GM13977 (cell line): ENCODE measurements at regions of chr19 and their contacts with region 1.

Region 1: GRCh38 chr19:9796113-9796773 is 22.6 kb downstream of the FBXL12 start:
- DNase-seq: peak; percentile 75
- CTCF ChIP-seq: peak; percentile 79

Region 2: DNA sequence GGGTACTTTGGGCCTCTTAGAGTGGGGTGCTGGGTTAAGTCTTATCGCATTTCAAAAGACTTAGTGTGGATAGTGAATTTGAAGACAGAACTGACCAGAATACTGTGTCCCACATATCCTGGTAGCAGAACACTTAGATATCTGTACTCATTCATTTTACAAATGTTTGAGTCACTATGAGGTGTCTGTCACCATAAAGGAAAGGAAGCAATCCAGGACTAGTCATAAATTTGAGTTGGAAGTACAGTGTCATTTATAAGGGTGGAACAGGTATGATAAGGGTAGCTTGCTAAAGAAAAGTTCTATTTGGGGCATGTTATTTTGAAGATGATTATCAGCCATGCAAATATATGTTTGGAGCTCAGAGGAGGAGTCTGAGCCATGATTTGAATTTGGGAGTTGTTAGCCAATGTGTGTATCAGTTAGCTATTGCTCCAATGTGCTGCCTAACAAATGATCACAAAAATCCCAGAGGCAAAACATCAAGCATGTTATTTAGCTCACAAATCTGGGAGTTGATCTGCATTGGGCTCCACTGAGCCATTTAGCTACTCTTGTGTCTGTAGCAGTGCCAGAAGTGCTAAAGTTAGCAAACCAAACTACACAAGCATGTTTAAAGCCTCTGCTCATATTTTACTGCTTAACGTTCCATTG is 506.9 kb before region 1 on chr19:
- in situ Hi-C with region 1: no loop called
- DNase-seq: no peak
- CTCF ChIP-seq: no peak

Region 3: GRCh38 chr19:9621156-9622037 is 174.8 kb before region 1 on chr19 and contains the start of gene ZNF561:
- in situ Hi-C with region 1: loop called (anchors 10 kb)
- DNase-seq: peak; percentile 78
- CTCF ChIP-seq: no peak